Naive thymus-derived CD4-positive, alpha-beta T cell (primary cell): ENCODE measurements at regions of chr12 and their contacts with region 1.

Region 1: DNA sequence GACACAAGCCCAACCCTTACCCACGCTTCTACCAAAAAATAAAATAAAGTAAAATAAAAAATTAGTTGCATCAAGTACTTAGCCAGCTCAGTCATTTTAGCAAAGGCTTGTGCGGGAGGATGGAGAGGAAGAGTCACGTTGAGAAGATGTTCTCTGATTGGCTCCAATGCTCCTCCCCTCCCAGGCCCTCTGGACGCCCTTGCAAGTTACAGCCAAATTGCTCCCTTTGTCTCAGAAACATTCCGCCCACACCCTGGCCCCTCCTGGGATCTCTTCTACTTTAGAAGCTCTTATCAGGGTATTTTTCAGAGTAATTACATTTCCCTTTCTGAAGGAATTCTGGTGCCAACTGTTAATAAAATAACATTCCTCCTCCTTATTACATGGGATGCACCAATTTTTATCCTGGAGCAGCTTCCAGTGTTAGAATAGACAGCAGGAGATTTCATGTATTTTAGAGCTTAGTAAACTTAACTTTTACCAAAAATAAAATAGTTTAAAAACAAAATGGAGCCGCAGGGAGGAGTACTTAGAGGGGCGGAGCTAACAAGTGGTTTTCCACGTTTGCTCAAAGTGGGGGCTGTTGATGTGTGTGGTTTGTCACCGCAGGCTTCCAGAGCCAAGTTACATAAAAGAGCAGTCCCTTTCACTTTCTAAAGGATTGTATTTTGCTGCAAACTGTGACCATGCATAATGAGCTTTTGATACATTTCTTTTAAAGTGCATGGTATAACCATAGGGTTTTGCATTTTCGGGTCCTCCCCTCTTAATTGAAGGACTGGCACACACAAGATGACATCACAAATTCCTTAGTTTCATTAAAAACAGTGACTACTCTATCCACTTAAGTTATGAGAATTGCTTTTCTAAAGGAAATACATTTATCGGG is 71.7 kb upstream of the RAP1B start:
- DNase-seq: peak in 8 of 9 donors; percentile 47 to 84 (median 76)
- ATAC-seq: peak; percentile 96
- H3K4me3 ChIP-seq: peak overlapping the region; percentile 23
- H3K4me3 Mint-ChIP-seq: peak overlapping the region; percentile 69 to 84 (median 74)
- H3K27ac ChIP-seq: peak overlapping the region; percentile 57
- H3K27ac Mint-ChIP-seq: peak overlapping the region; percentile 83 to 96 (median 88)
- H3K4me1 ChIP-seq: peaks cover 35 to 40% of the 10 kb centered on the region in 2 donors
- H3K4me1 Mint-ChIP-seq: peaks cover 26 to 64% (median 61%) of the 10 kb centered on the region in 7 donors
- H3K27me3 ChIP-seq: no peaks in the 10 kb centered on the region
- H3K27me3 Mint-ChIP-seq: no peaks in the 10 kb centered on the region

Region 2: GRCh38 chr12:68482660-68483059 is 56.3 kb before region 1 on chr12:
- CTCF ChIA-PET with region 1: no interaction called
- POLR2A ChIA-PET with region 1: interaction called, 3 read pairs
- intact Hi-C with region 1: loop called in 1 of 2 experiments (anchors 10 kb)
- DNase-seq: no peak
- ATAC-seq: peak; percentile 67
- H3K4me3 ChIP-seq: no peak overlapping the region
- H3K4me3 Mint-ChIP-seq: peak overlapping the region in 1 of 10 donors; percentile 74
- H3K27ac ChIP-seq: no peak overlapping the region
- H3K27ac Mint-ChIP-seq: peak overlapping the region in 5 of 9 donors; percentile 8 to 86 (median 65)
- H3K4me1 ChIP-seq: peaks cover 0 to 27% of the 10 kb centered on the region in 2 donors
- H3K4me1 Mint-ChIP-seq: peaks cover 10 to 46% (median 27%) of the 10 kb centered on the region in 7 donors
- H3K27me3 ChIP-seq: no peaks in the 10 kb centered on the region
- H3K27me3 Mint-ChIP-seq: no peaks in the 10 kb centered on the region

Region 3: GRCh38 chr12:68580911-68581310 is 41.9 kb after region 1 on chr12:
- CTCF ChIA-PET with region 1: interaction called, 4 read pairs
- POLR2A ChIA-PET with region 1: interaction called, 26 read pairs
- intact Hi-C with region 1: loop called (anchors 5 kb)
- DNase-seq: no peak
- ATAC-seq: no peak
- H3K4me3 ChIP-seq: no peak overlapping the region
- H3K4me3 Mint-ChIP-seq: no peak overlapping the region
- H3K27ac ChIP-seq: no peak overlapping the region
- H3K27ac Mint-ChIP-seq: no peak overlapping the region
- H3K4me1 ChIP-seq: peaks cover 9 to 18% of the 10 kb centered on the region in 2 donors
- H3K4me1 Mint-ChIP-seq: peaks cover 26 to 75% (median 57%) of the 10 kb centered on the region in 7 donors
- H3K27me3 ChIP-seq: no peaks in the 10 kb centered on the region
- H3K27me3 Mint-ChIP-seq: no peaks in the 10 kb centered on the region

Region 4: DNA sequence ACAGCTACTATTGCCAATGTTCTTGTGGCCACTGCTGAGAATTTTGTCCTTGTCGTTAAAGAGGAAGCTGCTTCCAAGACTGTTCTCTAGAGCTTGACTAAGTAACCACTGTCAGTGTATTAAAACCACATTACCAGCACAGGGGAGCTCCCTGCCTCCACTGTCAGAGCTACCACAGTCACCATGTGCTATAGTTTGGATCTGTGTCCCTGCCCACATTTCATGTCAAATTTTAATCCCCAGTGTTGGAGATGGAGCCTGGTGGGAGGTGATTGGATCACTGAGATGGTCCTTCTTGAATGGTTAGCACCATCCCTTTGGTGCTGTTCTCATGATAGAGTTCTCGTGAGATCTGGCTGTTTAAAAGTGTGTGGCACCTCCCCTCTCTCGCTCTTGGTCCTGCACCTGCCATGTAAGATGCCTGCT is 48.5 kb after region 1 on chr12:
- CTCF ChIA-PET with region 1: no interaction called
- POLR2A ChIA-PET with region 1: interaction called, 26 read pairs
- intact Hi-C with region 1: loop called (anchors 1 to 2 kb)
- DNase-seq: peak in 8 of 9 donors; percentile 39 to 66 (median 53)
- ATAC-seq: peak; percentile 72
- H3K4me3 ChIP-seq: no peak overlapping the region
- H3K4me3 Mint-ChIP-seq: peak overlapping the region; percentile 10 to 70 (median 64)
- H3K27ac ChIP-seq: no peak overlapping the region
- H3K27ac Mint-ChIP-seq: peak overlapping the region; percentile 78 to 96 (median 88)
- H3K4me1 ChIP-seq: peaks cover 26 to 37% of the 10 kb centered on the region in 2 donors
- H3K4me1 Mint-ChIP-seq: peaks cover 33 to 82% (median 60%) of the 10 kb centered on the region in 7 donors
- H3K27me3 ChIP-seq: no peaks in the 10 kb centered on the region
- H3K27me3 Mint-ChIP-seq: no peaks in the 10 kb centered on the region